Natural killer cell (primary cell): ENCODE measurements at regions of chr14 and their contacts with region 1.

Region 1: GRCh38 chr14:104078031-104078455 is 7.5 kb upstream of the ASPG start:
- DNase-seq: peak; percentile 76 to 92
- ATAC-seq: peak; percentile 96 to 100 (median 100)
- H3K4me3 ChIP-seq: no peak overlapping the region
- H3K4me3 Mint-ChIP-seq: no peak overlapping the region
- H3K27ac ChIP-seq: peak overlapping the region; percentile 11
- H3K27ac Mint-ChIP-seq: no peak overlapping the region
- H3K4me1 ChIP-seq: peaks cover 6% of the 10 kb centered on the region
- H3K4me1 Mint-ChIP-seq: peaks cover 9 to 16% of the 10 kb centered on the region in 2 donors
- H3K27me3 ChIP-seq: no peaks in the 10 kb centered on the region
- H3K27me3 Mint-ChIP-seq: peaks cover 6 to 10% of the 10 kb centered on the region in 2 donors
- CTCF ChIP-seq: peak; percentile 100

Region 2: DNA sequence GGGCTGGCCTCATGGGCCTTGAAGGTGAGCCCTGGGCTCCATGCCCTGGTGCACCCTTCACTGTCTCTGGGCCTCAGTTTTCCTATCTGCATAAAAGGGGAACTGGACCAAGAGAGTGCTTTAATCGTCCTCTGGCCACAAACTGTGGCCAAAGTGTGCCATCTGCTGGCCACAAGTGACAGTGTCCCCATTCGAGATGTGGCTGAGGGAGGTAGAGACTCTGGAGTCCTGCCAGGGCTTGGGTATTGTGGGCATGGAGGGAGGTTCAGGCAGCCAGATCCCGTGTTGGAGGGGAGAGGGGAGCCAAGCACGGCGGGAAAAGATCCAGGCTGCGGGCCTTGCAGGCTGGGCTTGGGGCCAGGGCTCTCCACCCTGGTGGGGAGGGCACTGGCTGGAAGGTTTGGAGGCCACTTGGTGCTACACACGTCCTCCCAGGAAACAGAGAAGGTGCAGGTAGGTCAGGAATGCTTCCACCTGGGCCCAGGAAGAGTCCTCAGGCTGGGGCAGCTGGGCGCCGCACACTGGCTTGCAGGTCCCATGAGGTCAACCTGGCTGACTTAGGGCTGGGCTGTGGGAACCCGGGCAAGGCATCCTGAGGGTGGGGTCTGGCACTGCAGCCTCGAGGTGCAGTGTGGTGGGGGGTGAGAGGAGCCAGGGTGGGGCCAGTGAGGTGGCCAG is 53.1 kb after region 1 on chr14:
- intact Hi-C with region 1: loop called (anchors 2 kb)
- DNase-seq: peak in 1 of 2 donors; percentile 28
- ATAC-seq: peak in 1 of 3 donors; percentile 43
- H3K4me3 ChIP-seq: no peak overlapping the region
- H3K4me3 Mint-ChIP-seq: no peak overlapping the region
- H3K27ac ChIP-seq: no peak overlapping the region
- H3K27ac Mint-ChIP-seq: no peak overlapping the region
- H3K4me1 ChIP-seq: no peaks in the 10 kb centered on the region
- H3K4me1 Mint-ChIP-seq: peaks cover 0 to 5% of the 10 kb centered on the region in 2 donors
- H3K27me3 ChIP-seq: peaks cover 10% of the 10 kb centered on the region
- H3K27me3 Mint-ChIP-seq: peaks cover 25 to 46% of the 10 kb centered on the region in 2 donors
- CTCF ChIP-seq: peak; percentile 16